OCI-LY7 (cell line): ENCODE measurements at regions of chr2 and their contacts with region 1.

Region 1: DNA sequence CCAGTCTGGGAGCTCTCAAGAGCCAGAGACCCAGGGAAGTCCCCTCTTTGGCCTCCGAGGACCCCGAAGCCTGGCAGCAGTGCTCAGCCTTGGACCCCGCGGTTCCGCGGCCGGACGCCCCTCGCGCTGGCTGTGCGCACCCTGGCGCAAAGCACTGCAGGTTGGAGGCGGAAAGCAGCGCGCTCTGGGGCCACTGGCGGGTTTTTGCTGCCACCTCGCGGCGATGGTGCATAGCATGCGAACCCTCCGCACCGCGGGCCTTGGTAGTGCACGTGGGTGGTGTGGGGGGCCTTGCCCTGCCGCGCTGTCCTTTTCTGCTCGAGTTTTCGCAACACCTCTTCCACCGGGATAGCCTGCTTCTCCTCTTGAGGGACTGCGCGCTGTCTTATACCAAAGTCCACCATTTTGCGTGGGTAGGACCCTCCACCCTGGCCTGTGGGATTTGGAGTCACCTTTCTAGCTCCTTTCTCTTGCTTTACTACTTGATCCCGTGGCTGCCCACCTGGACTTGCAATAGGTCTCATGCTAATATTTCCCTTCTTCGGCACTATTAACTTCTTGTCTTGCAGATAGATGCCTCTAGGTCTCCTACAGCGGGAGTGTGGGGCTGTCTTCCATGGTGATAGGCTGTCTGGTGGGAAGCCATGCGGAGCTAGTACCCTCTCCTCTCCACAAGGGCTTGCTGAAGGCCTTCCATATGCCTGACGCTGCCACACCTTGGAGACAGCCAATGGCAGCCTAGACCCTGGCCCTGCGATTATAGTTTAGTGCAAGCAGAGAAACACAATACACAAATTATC is 14.3 kb downstream of the SIX3 start:
- DNase-seq: peak; percentile 73
- H3K4me3 ChIP-seq: no peak overlapping the region
- H3K27ac ChIP-seq: no peak overlapping the region
- H3K4me1 ChIP-seq: no peaks in the 10 kb centered on the region
- CTCF ChIP-seq: peak; percentile 87

Region 2: DNA sequence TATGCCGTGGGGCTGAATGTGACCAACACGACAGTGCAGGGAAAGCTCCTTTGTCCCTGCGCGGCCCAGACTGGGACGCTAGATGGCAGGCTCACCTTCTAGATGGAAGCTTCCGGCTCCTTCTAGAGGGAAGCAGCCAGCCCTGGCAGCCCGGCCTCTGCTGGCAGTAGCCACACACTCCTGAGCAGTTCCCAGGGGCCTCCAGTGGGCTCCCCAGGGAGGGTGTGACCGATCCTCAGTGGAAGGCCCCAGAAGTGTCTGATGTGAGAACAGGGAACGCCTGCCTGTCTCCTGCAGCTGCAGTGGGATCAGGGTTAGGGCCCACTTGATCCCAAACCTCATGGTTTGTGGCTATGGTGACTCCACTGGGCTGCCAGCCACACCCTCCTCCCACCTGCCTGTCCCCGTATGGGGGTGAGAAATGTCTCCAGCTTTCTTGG is 911.5 kb before region 1 on chr2:
- CTCF ChIA-PET with region 1: no interaction called
- POLR2A ChIA-PET with region 1: no interaction called
- intact Hi-C with region 1: loop called (anchors 5 kb)
- DNase-seq: peak; percentile 86
- H3K4me3 ChIP-seq: no peak overlapping the region
- H3K27ac ChIP-seq: no peak overlapping the region
- H3K4me1 ChIP-seq: no peaks in the 10 kb centered on the region
- CTCF ChIP-seq: peak; percentile 84

Region 3: DNA sequence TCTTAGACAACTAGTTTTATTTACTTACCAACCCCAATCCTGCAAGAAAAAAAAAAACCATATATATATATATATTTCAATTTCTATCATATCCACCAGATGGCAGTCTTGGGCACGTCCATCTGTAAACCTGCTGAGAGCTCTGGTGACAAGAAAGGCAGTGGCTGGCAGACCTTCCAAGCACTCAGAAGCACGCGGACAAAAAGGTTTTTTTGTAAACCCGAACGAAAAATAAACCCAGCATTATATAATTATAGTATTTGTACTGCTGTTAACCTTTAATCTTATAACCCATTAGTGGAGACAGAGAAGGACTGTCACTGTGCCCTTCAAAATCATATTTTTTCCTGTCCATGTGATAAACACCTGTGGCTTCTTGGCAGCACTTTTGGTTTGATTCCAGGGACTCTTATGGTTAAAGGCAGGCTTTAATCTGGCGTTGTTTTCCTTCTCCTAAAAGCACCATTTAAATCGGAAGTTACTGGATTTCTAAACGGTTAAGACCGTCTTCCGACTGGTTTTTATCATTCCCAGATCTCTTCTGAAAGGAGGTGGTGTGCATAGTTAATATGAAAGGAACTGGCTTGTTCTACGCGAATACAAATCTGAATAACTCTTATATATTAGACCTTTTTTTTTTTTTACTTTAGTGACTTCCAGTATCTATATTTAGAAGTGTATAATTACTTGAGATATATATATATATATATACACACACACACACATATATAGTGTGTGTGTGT is 711.5 kb before region 1 on chr2:
- CTCF ChIA-PET with region 1: no interaction called
- POLR2A ChIA-PET with region 1: no interaction called
- intact Hi-C with region 1: loop called (anchors 5 kb)
- DNase-seq: peak; percentile 79
- H3K4me3 ChIP-seq: peak overlapping the region; percentile 23
- H3K27ac ChIP-seq: no peak overlapping the region
- H3K4me1 ChIP-seq: peaks cover 4% of the 10 kb centered on the region
- CTCF ChIP-seq: peak; percentile 83

Region 4: GRCh38 chr2:44392338-44392943 is 563.4 kb before region 1 on chr2:
- CTCF ChIA-PET with region 1: interaction called, 5 read pairs
- POLR2A ChIA-PET with region 1: no interaction called
- intact Hi-C with region 1: loop called (anchors 5 kb)
- DNase-seq: peak; percentile 58
- H3K4me3 ChIP-seq: no peak overlapping the region
- H3K27ac ChIP-seq: no peak overlapping the region
- H3K4me1 ChIP-seq: no peaks in the 10 kb centered on the region
- CTCF ChIP-seq: peak; percentile 88

Region 5: DNA sequence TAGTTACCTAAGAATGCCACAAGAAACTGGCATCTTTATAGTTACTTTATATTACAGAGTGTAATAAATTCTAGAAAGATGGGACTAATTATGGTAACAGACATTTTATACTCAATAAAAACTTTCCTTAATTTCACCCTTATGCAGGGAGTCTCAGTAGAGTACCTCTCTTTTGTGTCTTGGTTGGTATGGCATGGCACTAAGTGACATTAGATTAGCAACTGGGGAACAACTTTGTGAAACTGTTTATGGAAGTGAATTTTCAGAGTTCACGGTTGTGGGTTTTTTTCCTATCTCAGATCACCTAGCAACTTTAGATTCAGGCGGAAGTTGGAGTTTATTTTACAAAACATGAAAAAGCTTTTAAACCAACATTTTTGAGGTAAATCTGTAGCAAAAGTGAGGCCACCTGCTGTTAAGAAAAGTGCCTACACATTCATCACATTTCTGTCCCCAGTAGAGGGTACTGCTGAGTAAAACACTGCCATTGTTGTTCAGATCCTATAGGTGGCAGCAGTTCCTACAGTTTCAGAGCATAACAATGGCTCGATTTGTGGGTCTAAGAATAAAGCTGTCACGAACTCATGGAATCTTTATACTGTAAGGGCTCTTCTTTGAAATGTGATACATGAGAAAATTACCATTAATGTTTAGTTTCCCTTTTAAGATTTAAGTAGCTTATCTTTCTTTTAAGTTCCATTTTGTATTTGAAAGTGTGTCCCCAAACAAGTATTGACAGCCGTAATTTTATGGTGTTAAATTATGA is 476.5 kb before region 1 on chr2:
- CTCF ChIA-PET with region 1: interaction called, 5 read pairs
- POLR2A ChIA-PET with region 1: no interaction called
- intact Hi-C with region 1: loop called (anchors 2 kb)
- DNase-seq: peak; percentile 83
- H3K4me3 ChIP-seq: no peak overlapping the region
- H3K27ac ChIP-seq: no peak overlapping the region
- H3K4me1 ChIP-seq: no peaks in the 10 kb centered on the region
- CTCF ChIP-seq: peak; percentile 100

Region 6: DNA sequence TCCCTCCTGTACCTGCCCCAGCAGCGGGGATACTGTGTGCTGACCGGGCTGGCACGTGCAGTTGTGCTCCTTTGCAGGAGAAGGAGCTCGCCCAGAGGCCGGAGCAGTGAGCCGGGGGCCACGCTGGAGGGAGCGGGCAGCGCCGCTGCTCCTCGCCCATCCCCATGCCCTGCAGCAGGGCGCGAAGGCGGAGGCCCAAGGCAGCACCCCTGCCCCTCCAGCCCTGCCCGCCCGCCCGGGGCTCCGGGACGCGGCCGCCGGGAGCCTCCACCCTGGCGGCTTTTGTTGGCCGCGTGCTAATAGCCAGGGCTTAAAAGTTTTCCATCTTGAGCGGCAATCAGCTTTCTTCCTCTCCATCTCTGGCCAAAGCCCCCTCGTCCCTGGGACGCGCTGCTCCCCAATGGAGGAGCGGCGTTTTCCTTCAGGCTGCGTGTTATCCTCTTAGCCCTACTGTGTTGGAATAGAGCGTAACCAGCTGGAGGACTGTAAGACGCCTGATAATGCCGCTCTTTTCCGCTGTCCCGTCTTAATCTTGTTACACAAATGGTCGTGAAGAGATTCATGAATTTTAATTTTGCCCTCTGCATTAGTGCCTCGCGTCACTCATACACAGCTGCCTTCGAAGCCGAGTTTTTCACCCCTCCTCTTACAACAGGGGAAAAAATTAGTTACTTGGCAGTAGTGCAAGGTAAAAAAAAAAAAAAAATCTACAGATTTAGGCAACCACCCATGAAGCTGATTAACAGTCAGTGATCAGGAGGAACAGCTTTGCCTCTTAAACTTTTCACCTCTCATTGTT is 187.2 kb before region 1 on chr2:
- CTCF ChIA-PET with region 1: no interaction called
- POLR2A ChIA-PET with region 1: no interaction called
- intact Hi-C with region 1: loop called (anchors 2 kb)
- DNase-seq: no peak
- H3K4me3 ChIP-seq: no peak overlapping the region
- H3K27ac ChIP-seq: no peak overlapping the region
- H3K4me1 ChIP-seq: no peaks in the 10 kb centered on the region
- CTCF ChIP-seq: no peak

Region 7: DNA sequence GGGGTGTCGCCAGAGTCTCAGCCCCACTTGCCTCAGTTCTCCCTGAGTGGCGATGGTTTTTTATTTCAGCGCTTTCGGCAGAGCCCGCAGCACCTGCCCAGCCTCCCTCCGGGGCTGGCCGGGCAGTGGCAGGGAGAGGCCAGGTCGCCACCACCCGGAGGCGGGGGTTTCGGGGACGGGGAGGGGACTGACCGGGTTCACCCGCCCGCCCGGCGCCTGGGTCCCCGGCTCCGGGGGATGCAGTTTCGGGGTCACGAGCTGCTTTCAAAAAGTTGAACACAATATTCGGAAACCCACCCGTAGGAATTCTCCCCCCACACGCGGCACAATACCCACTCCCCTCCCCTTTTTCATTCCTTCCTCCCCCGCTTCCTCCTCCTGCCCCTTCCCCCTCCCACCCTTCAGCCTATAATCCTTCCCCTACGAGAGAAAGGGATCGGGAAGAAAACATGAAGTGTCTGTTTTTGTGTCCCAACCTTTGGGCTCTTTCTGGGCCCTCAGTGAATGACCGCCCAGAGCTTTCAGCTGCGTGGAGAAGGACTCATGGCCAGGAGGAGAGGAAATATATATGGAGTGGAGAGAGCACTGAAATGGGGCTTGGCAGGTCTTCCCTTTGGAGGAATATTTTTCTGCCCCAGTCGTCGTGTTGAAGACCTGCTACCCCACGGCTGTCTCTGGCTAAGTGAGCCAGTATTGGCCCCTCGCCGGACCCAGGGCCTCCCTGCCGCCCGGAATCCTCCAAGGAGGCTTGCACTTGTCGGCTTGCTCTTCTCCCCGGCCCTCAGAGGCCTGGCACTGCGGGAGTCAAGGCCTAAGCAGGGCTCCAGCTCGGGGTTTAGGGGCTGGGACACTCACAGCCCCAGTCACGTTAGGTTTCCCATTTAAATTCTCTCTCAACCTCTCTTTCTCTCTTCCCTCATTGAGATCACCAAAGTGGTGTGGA is 16.4 kb before region 1 on chr2:
- CTCF ChIA-PET with region 1: no interaction called
- POLR2A ChIA-PET with region 1: interaction called, 13 read pairs
- intact Hi-C with region 1: no loop called
- DNase-seq: no peak
- H3K4me3 ChIP-seq: no peak overlapping the region
- H3K27ac ChIP-seq: no peak overlapping the region
- H3K4me1 ChIP-seq: no peaks in the 10 kb centered on the region
- CTCF ChIP-seq: no peak